Dorsolateral prefrontal cortex (tissue), 120 donors: ENCODE measurements at regions of chr1 and their contacts with region 1.

Region 1: GRCh38 chr1:66339944-66340343 is 194.0 kb upstream of the SGIP1 start:
- DNase-seq: no peak
- H3K4me3 ChIP-seq: peak overlapping the region in 14 of 59 donors; percentile 2 to 29 (median 8)
- H3K27ac ChIP-seq: peak overlapping the region in 53 of 59 donors; percentile 0 to 79 (median 51)
- H3K27me3 ChIP-seq: no peaks in the 10 kb centered on the region
- CTCF ChIP-seq: no peak

Region 2: GRCh38 chr1:66262211-66262963 is 77.6 kb before region 1 on chr1:
- intact Hi-C with region 1: loop called in 1 of 2 experiments (anchors 5 kb)
- DNase-seq: no peak
- H3K4me3 ChIP-seq: no peak overlapping the region
- H3K27ac ChIP-seq: peak overlapping the region in 8 of 59 donors; percentile 1 to 96 (median 26)
- H3K27me3 ChIP-seq: no peaks in the 10 kb centered on the region
- CTCF ChIP-seq: no peak